ENCODE measurements at regions of chr17 and their contacts with region 1.

Region 1: GRCh38 chr17:17496189-17497064 is at the start of gene RASD1:
- DNase-seq: peak; percentile 75
- H3K4me3 ChIP-seq: peak within 1 kb of the TSS; percentile 41
- H3K27ac ChIP-seq: no peak within 1 kb of the TSS
- H3K4me1 ChIP-seq: peaks cover 10% of the 10 kb centered on the region
- CTCF ChIP-seq: peak; percentile 83
- total RNA-seq, gene RASD1: 0.08 and 0.19 TPM in 2 replicates

Region 2: GRCh38 chr17:17476865-17477467 is 19.5 kb before region 1 on chr17 and contains the start of gene MED9:
- CTCF ChIA-PET with region 1: no interaction called
- POLR2A ChIA-PET with region 1: no interaction called
- intact Hi-C with region 1: no loop called
- DNase-seq: peak; percentile 95
- H3K4me3 ChIP-seq: peak within 1 kb of the TSS; percentile 83
- H3K27ac ChIP-seq: peak within 1 kb of the TSS; percentile 84
- H3K4me1 ChIP-seq: peaks cover 42% of the 10 kb centered on the region
- CTCF ChIP-seq: no peak
- total RNA-seq, gene MED9: 17.1 and 27.5 TPM in 2 replicates

Region 3: GRCh38 chr17:17641621-17642409 is 145.4 kb after region 1 on chr17:
- CTCF ChIA-PET with region 1: interaction called, 5 read pairs
- POLR2A ChIA-PET with region 1: no interaction called
- intact Hi-C with region 1: loop called (anchors 1 kb)
- DNase-seq: peak; percentile 82
- H3K4me3 ChIP-seq: no peak overlapping the region
- H3K27ac ChIP-seq: no peak overlapping the region
- H3K4me1 ChIP-seq: no peaks in the 10 kb centered on the region
- CTCF ChIP-seq: peak; percentile 96